Posterior cingulate gyrus (tissue), 11 donors: ENCODE measurements at regions of chr16 and their contacts with region 1.

Region 1: DNA sequence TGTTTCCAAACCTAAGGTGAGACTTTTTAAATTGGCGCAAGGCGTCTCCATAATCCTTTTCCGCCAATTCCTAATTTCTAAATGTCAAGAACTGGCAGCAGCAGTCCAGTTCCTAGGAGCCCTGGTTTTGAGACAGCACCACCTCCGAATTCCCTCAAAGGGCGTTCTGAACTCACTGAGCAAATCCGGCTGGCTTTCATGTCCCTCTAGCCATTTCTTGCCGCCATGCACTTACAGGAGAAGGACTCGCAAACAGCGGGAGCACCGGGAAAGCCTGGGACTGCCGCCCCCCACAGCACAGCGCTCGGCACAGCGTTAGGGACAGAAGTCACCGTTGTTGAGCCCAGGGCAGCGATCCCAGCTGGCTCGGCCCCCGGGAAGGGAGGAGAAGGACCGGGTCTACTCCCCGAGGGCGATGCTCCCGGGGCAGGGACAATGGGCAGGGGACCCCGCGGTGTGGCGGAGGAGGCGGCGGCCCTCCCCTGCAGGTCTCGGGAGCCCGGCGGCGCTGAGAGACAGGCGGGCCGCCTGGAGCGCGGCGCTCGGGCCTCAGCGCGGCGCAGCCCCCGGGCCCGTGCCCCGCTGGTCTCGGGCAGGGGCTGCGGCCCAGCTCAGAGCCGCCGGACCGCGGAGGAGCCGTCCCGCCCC is 545 bp downstream of the ARHGAP17 start:
- DNase-seq: peak; percentile 57 to 95 (median 70)

Region 2: DNA sequence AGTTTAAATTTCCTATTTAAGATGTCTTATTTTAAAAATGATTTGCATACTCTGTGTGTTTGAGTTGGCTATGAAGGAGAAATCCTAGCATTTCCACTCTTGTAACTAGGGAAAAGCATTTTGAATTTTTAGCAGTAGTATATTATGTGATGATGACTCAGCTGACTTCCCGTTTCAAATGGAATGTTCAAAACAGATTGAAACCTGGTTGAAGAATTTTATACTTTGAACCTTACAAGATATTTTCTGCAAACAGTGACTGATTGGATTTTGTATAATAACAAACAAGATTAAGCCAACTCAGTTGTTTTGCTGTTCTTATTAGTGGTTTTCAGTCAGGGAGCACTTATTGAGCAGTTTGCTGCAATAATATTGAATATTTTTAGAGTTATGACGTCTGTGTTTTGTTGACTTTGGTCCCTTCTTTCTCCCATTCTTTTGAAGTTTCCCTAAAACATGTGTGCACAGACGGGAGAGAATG is 277.2 kb before region 1 on chr16:
- intact Hi-C with region 1: no loop called
- DNase-seq: no peak

Region 3: GRCh38 chr16:24834459-24835335 is 179.9 kb before region 1 on chr16:
- intact Hi-C with region 1: loop called (anchors 10 kb)
- DNase-seq: peak in 5 of 10 donors; percentile 53 to 87 (median 57)

Region 4: GRCh38 chr16:24980077-24980793 is 34.4 kb before region 1 on chr16:
- intact Hi-C with region 1: loop called (anchors 5 kb)
- DNase-seq: peak in 1 of 10 donors; percentile 37